Esophagus squamous epithelium (tissue), 5 donors: ENCODE measurements at regions of chr2 and their contacts with region 1.

Region 1: DNA sequence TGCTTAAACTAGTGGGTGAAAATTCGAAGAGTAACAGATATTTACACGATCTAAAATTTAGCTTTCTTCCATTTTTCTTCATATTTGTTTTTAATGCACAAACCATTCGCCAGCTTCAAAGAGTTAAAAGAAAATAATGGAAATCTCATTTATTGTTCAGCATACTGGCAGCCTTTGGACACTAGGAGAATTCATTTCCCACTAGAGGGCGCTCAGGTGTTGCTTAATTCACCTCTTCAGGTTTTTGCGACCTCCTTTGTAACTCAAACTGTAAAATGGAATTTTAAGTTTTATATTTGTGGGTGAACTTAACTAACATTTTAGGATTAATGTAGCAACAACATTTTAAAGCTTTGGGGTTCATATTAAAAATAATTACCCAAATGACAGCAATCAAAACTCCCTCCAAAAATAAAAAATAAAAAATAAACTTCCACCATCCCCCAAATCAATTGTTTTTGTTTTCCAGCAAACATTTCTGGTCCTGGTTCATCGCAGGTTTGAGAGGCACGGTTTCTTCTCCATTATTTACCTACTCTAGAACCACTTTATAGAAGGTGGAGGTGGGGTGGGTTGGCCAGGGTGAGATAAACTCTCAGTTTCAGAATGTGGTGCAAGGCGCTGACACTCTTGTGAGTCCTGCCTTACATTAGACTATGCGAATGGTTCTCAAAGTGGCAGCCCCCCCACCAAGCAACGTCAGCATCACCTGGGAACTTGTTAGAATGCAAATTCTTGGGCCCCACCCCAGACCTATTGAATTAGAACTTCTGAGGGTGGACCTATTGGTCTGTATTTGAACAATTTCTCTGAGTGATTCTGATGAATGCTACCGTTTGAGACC is 24.7 kb upstream of the PNPT1 start:
- DNase-seq: no peak
- H3K4me3 ChIP-seq: no peak overlapping the region
- H3K27ac ChIP-seq: no peak overlapping the region
- H3K4me1 ChIP-seq: peaks cover 0 to 7% (median 0%) of the 10 kb centered on the region in 3 donors
- H3K27me3 ChIP-seq: no peaks in the 10 kb centered on the region
- CTCF ChIP-seq: peak in 5 of 6 experiments; percentile 69 to 81 (median 73)
- POLR2A ChIP-seq: no peak

Region 2: GRCh38 chr2:56009758-56010458 is 291.5 kb after region 1 on chr2:
- intact Hi-C with region 1: loop called (anchors 5 kb)
- DNase-seq: no peak
- H3K4me3 ChIP-seq: no peak overlapping the region
- H3K27ac ChIP-seq: no peak overlapping the region
- H3K4me1 ChIP-seq: peaks cover 0 to 5% (median 0%) of the 10 kb centered on the region in 3 donors
- H3K27me3 ChIP-seq: no peaks in the 10 kb centered on the region
- CTCF ChIP-seq: peak in 5 of 6 experiments; percentile 16 to 60 (median 46)
- POLR2A ChIP-seq: no peak

Region 3: GRCh38 chr2:56127463-56128152 is 409.2 kb after region 1 on chr2:
- intact Hi-C with region 1: loop called (anchors 10 kb)
- DNase-seq: no peak
- H3K4me3 ChIP-seq: no peak overlapping the region
- H3K27ac ChIP-seq: no peak overlapping the region
- H3K4me1 ChIP-seq: no peaks in the 10 kb centered on the region
- H3K27me3 ChIP-seq: no peaks in the 10 kb centered on the region
- CTCF ChIP-seq: no peak
- POLR2A ChIP-seq: no peak